ENCODE measurements at regions of chr11 and their contacts with region 1.

Region 1: DNA sequence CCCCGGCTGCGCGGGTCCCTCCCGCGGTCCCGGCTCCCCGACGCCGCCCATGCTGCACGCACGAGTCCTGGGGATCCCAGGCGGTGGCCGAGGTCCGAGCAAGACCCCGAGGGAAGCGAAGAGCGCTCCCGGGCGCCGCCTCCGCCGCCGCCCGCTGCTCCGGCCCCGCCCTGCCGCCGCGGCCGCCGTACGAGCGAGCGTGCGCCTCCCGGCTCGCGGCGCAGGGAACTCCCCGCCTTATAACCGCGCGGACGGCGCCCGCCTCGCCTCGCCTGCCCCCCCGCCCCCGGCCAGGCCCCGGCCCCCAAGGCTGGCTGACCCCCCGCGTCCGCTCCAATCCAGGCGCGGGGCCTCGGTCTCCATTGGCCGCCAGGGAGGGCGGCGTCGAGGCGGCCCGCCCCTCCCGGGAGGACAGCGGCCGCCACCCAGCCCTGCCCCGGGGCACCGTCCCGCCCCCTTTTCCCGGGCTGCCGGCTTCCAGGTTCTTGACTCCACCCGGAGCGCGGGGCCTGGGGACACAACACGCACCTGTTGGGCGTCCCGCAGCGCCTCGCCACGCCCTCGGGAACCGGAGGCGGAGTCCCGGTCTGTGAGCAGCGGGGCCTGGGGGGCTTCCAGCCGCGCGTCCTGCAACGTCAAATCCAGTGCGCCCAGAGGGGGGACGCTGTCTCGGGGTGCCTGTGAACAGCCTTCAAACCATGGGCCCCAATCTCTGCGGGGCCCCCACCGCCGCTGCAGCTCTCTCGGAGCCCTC is at the start of gene FADS3:
- DNase-seq: peak; percentile 81
- ATAC-seq: peak; percentile 63
- H3K4me3 Mint-ChIP-seq: peak within 1 kb of the TSS; percentile 88
- H3K27ac Mint-ChIP-seq: peak within 1 kb of the TSS; percentile 87
- H3K4me1 Mint-ChIP-seq: peaks cover 41% of the 10 kb centered on the region
- H3K27me3 Mint-ChIP-seq: no peaks in the 10 kb centered on the region
- CTCF ChIP-seq: no peak
- total RNA-seq, gene FADS3: 121 and 135 TPM in 2 replicates

Region 2: GRCh38 chr11:61764606-61765260 is 126.8 kb before region 1 on chr11:
- CTCF ChIA-PET with region 1: no interaction called
- POLR2A ChIA-PET with region 1: no interaction called
- intact Hi-C with region 1: no loop called
- DNase-seq: no peak
- ATAC-seq: no peak
- H3K4me3 Mint-ChIP-seq: no peak overlapping the region
- H3K27ac Mint-ChIP-seq: no peak overlapping the region
- H3K4me1 Mint-ChIP-seq: no peaks in the 10 kb centered on the region
- H3K27me3 Mint-ChIP-seq: peaks cover 7% of the 10 kb centered on the region
- CTCF ChIP-seq: no peak

Region 3: GRCh38 chr11:61879711-61880430 is 11.6 kb before region 1 on chr11:
- CTCF ChIA-PET with region 1: interaction called, 67 read pairs
- POLR2A ChIA-PET with region 1: interaction called, 63 read pairs
- intact Hi-C with region 1: loop called (anchors 1 kb)
- DNase-seq: peak; percentile 37
- ATAC-seq: peak; percentile 76
- H3K4me3 Mint-ChIP-seq: peak overlapping the region; percentile 85
- H3K27ac Mint-ChIP-seq: peak overlapping the region; percentile 93
- H3K4me1 Mint-ChIP-seq: peaks cover 50% of the 10 kb centered on the region
- H3K27me3 Mint-ChIP-seq: no peaks in the 10 kb centered on the region
- CTCF ChIP-seq: no peak

Region 4: GRCh38 chr11:62123669-62124185 is 232.2 kb after region 1 on chr11 and contains the start of gene INCENP:
- CTCF ChIA-PET with region 1: interaction called, 4 read pairs
- POLR2A ChIA-PET with region 1: no interaction called
- intact Hi-C with region 1: loop called (anchors 5 kb)
- DNase-seq: peak; percentile 80
- ATAC-seq: peak; percentile 99
- H3K4me3 Mint-ChIP-seq: peak within 1 kb of the TSS; percentile 93
- H3K27ac Mint-ChIP-seq: peak within 1 kb of the TSS; percentile 84
- H3K4me1 Mint-ChIP-seq: peaks cover 23% of the 10 kb centered on the region
- H3K27me3 Mint-ChIP-seq: no peaks in the 10 kb centered on the region
- CTCF ChIP-seq: no peak
- total RNA-seq, gene INCENP: 29.0 and 34.8 TPM in 2 replicates